ENCODE measurements at regions of chr12 and their contacts with region 1.

Region 1: GRCh38 chr12:47949441-47950308 is 13.7 kb upstream of the TMEM106C start:
- DNase-seq: no peak
- ATAC-seq: peak; percentile 93
- H3K4me3 ChIP-seq: no peak overlapping the region
- H3K27ac ChIP-seq: no peak overlapping the region
- H3K4me1 ChIP-seq: no peaks in the 10 kb centered on the region
- H3K27me3 ChIP-seq: 0 out of 4 replicates have a peak, but pooled peaks cover 0 to 5% of the 10 kb centered on the region in 2 experiments
- CTCF ChIP-seq: peak; percentile 75 to 89 (median 87)
- EP300 ChIP-seq: no peak
- POLR2A ChIP-seq: no peak
- RAD21 ChIP-seq: peak; percentile 76

Region 2: DNA sequence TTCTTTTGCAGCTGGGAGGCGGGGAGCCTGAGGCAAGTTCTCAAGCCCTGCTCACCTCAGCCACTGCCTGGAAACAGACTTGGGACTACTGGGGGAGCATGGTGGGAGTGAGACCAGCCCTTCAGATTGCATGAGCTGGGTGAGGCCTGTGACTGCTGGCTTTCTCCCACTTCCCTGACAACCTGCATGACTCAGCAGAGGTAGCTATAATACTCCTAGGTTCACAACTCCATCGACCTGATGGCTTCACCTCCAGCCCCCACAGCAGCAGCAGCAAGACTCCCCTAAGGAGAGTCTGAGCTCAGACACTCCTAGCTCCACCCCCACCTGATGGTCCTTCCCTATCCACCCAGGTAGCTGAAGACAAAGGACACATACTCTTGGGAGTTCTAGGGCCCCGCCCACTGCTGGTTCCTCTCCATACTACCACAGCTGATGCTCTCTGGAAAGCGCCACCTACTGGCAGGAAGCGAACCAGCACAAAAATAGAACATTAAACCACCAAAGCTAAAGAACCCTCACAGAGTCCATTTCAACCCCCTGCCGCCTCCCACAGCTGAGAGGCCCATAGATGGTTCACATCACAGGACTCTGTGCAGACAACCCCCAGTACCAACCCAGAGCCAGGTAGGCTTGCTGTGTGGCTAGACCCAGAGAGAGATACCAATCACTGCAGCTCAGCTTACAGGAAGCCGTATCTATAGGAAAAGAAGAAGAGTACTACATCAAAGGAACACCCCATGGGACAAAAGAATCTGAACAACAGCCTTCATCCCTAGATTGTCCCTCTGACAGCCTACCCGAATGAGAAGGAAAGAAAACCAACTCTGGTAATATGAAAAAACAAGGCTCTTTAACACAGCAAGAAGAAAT is 312.5 kb before region 1 on chr12:
- CTCF ChIA-PET with region 1: no interaction called
- POLR2A ChIA-PET with region 1: no interaction called
- RAD21 ChIA-PET with region 1: no interaction called
- SMC1A ChIA-PET with region 1: no interaction called
- in situ Hi-C with region 1: no loop called
- intact Hi-C with region 1: no loop called
- DNase-seq: no peak
- ATAC-seq: no peak
- H3K4me3 ChIP-seq: no peak overlapping the region
- H3K27ac ChIP-seq: no peak overlapping the region
- H3K4me1 ChIP-seq: no peaks in the 10 kb centered on the region
- H3K27me3 ChIP-seq: no peaks in the 10 kb centered on the region
- CTCF ChIP-seq: peak; percentile 15 to 50 (median 47); a peak in 5 of 6 replicates
- EP300 ChIP-seq: no peak
- POLR2A ChIP-seq: no peak
- RAD21 ChIP-seq: 0 out of 2 replicates have a peak, but pooled peaks have one; percentile 7

Region 3: GRCh38 chr12:47797441-47797840 is 152.2 kb before region 1 on chr12:
- CTCF ChIA-PET with region 1: interaction called, 9 read pairs
- POLR2A ChIA-PET with region 1: no interaction called
- RAD21 ChIA-PET with region 1: interaction called, 3 read pairs
- SMC1A ChIA-PET with region 1: no interaction called
- in situ Hi-C with region 1: no loop called
- intact Hi-C with region 1: loop called (anchors 1 kb)
- DNase-seq: no peak
- ATAC-seq: peak; percentile 89
- H3K4me3 ChIP-seq: no peak overlapping the region
- H3K27ac ChIP-seq: no peak overlapping the region
- H3K4me1 ChIP-seq: peaks cover 1% of the 10 kb centered on the region
- H3K27me3 ChIP-seq: no peaks in the 10 kb centered on the region; a peak in 1 of 4 replicates
- CTCF ChIP-seq: peak; percentile 63 to 74 (median 65)
- EP300 ChIP-seq: no peak
- POLR2A ChIP-seq: no peak
- RAD21 ChIP-seq: peak; percentile 77

Region 4: DNA sequence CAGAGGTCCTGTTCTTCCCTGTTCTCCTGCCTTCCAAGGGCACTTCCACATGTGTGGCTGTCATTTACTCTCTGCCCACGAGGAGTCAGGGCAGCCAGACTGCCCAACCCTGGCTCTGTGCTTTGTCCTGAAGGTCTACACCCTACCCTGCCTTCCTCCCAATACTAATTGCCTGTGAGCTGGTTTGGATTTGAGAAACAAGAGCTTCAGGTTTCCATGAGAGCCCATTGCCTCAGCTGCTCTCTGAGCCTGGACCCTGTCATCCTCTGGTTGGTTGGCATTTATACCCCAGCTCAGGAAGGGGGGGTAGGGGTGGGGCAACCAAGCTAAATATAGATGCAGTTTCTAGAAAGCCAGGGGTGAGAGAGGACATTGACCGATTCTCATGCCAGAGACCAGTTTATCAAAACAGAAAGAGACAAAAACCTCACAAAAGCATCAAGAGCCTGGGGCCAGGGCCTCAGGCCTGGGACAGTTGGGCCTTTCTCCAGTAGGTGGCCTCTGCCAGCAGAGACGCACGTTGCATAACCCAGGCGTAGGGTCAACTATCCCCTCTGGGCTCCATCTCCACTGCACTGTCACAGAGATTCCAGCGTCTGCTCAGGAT is 79.4 kb before region 1 on chr12:
- CTCF ChIA-PET with region 1: interaction called, 19 read pairs
- POLR2A ChIA-PET with region 1: no interaction called
- RAD21 ChIA-PET with region 1: interaction called, 11 read pairs
- SMC1A ChIA-PET with region 1: interaction called, 10 read pairs
- in situ Hi-C with region 1: no loop called
- intact Hi-C with region 1: no loop called
- DNase-seq: peak; percentile 43
- ATAC-seq: peak; percentile 76
- H3K4me3 ChIP-seq: no peak overlapping the region
- H3K27ac ChIP-seq: 0 out of 2 replicates have a peak overlapping the region, but pooled peaks have one; percentile 4
- H3K4me1 ChIP-seq: peaks cover 31% of the 10 kb centered on the region
- H3K27me3 ChIP-seq: no peaks in the 10 kb centered on the region
- CTCF ChIP-seq: peak; percentile 22 to 62 (median 53); a peak in 5 of 6 replicates
- EP300 ChIP-seq: no peak
- POLR2A ChIP-seq: no peak
- RAD21 ChIP-seq: peak; percentile 51

Region 5: GRCh38 chr12:47904713-47905310 is 44.9 kb before region 1 on chr12 and contains the start of gene VDR:
- CTCF ChIA-PET with region 1: interaction called, 15 read pairs
- POLR2A ChIA-PET with region 1: interaction called, 3 read pairs
- RAD21 ChIA-PET with region 1: interaction called, 10 read pairs
- SMC1A ChIA-PET with region 1: interaction called, 4 read pairs
- in situ Hi-C with region 1: no loop called
- intact Hi-C with region 1: loop called (anchors 5 kb)
- DNase-seq: no peak
- ATAC-seq: peak; percentile 85
- H3K4me3 ChIP-seq: peak within 1 kb of the TSS; percentile 84
- H3K27ac ChIP-seq: no peak within 1 kb of the TSS
- H3K4me1 ChIP-seq: peaks cover 30% of the 10 kb centered on the region
- H3K27me3 ChIP-seq: peaks cover 4 to 5% of the 10 kb centered on the region in 2 experiments; a peak in 1 of 4 replicates
- CTCF ChIP-seq: peak in 2 of 3 experiments; percentile 4 to 34; a peak in 2 of 6 replicates
- EP300 ChIP-seq: no peak
- POLR2A ChIP-seq: peak; percentile 69
- RAD21 ChIP-seq: no peak
- polyA plus RNA-seq, gene VDR: 0.27 to 0.75 TPM

Region 6: DNA sequence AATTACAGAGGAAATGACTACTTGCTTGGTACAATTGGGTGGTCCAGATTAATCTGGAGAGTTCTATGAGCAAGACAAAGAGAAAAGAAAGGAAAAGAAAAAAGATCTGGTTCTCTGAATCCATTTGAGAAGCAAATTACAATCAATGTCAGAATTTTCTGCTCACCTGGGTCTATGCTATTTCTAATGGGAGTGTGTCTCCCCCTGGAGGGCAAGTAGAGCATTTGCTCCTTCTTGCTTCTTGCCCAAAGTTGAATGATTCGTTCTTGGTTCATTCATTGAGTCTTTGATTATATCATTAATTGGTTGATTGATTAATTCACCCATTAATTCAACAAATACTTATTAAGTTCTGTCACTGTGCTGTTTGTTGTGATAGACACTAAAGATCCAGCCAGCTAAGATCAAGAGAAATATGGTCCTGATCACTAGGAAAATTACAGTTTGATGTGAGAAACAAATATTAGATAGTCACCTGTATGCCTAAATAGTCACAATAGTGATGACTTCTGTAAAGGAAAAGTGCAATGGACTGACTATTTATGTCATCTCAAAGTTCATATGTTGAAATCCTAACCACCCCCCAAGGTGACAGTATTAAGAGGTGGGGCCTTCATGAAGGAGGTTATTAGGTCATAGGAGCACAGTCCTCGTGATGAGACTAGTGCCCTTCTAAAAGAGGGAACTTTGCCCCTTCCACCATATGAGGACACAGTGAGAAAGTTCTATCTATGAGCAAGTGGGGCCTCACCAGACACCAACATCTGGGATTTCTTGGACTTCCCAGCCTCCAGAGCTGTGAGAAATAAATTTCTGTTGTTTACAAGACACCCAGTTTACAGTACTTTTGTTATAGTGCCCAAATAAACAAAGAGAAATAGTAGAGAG is 215.7 kb after region 1 on chr12:
- CTCF ChIA-PET with region 1: interaction called, 10 read pairs
- POLR2A ChIA-PET with region 1: no interaction called
- RAD21 ChIA-PET with region 1: no interaction called
- SMC1A ChIA-PET with region 1: interaction called, 3 read pairs
- in situ Hi-C with region 1: no loop called
- intact Hi-C with region 1: no loop called
- DNase-seq: peak; percentile 45
- ATAC-seq: peak; percentile 82
- H3K4me3 ChIP-seq: no peak overlapping the region
- H3K27ac ChIP-seq: no peak overlapping the region
- H3K4me1 ChIP-seq: peaks cover 4% of the 10 kb centered on the region; the same call in 1 of the 2 replicates
- H3K27me3 ChIP-seq: peaks cover 0 to 2% of the 10 kb centered on the region in 2 experiments; a peak in 2 of 4 replicates
- CTCF ChIP-seq: peak; percentile 89 to 94 (median 93)
- EP300 ChIP-seq: no peak
- POLR2A ChIP-seq: no peak
- RAD21 ChIP-seq: peak; percentile 92

Measured in GM12878 (cell line).